ENCODE measurements at regions of chr2 and their contacts with region 1.

Region 1: DNA sequence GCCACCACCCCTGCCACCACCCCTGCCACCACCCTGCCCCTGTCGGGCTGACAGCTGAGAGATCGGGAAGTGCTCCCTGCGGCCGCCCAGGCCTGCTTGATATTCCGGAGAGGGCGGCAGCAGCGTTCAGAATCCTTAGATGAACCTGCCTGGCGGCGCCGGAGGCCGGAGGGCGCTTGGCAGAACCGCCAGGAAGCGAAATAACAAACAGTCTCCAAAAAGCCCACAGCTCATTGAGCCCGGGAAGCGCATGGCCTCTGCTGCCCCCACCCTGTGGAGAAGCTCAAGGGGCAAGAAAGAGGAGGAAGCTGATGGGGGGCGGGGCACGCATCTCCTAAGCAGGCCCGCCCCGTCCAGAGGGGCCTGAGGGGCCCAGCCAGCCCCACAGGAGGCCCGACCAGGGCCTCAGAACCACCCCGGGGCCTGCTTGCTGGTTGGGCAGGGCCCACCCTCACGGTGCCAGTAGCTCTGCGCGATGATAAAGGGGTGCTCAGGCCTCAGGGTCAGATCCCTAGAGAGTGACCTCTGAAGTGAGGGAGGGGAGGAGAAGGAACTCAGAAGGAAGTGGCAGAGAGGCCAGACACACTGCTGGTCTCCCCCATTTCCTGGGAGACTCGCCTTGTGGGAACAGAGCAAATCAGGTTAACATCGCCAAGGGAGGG is 92.3 kb upstream of the MBOAT2 start:
- DNase-seq: peak; percentile 35 to 93 (median 64)

Region 2: DNA sequence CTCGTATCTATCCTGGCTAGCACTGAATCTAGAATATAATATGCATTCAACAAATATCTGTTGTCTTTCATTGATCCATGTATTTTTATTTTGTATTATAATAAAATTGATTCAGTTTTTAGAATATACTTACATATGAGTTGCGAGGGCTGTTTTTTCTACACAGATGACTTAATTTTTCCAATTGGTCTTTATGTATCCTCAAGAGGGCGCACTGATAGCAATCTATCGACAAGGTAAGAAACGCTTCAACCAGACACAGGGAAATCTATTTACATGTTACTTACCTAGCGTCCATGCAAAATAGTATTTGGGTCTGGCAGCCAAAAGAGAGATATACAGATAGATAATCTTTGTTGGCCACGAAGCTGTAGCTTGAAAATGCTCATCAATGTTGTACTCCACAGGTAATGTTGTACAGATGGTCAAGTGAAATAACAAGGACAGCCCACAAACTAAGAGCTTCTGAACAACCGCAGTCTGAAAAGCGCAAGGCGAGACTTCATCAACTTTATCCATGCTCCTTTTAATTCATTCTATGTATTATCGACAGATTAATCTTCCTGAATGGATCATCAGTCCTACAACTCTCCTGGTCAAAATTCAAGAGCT is 222.9 kb before region 1 on chr2:
- intact Hi-C with region 1: loop called (anchors 5 kb)
- DNase-seq: no peak

Region 3: DNA sequence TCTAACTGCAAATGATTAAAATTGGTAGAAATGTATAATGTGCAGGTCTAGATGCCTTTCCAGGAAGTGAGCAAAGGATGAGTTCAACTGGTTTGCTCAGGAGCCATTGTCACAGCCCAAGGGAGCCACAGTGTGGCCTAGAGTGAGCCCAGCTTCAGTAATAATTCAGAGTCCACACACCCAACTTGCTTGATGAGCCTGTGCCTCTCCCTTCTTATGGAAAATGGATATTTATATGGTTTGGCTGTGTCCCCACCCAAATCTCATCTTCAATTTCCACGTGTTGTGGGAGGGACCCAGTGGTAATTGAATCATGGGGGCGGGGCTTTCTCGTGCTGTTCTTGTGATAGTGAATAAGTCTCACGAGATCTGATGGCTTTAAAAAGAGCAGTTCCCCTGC is 18.7 kb after region 1 on chr2:
- intact Hi-C with region 1: loop called (anchors 1 kb)
- DNase-seq: no peak